ENCODE measurements at regions of chr1 and their contacts with region 1.

Region 1: GRCh38 chr1:226920446-226920894 is 19.6 kb upstream of the COQ8A start:
- DNase-seq: peak; percentile 76 to 93 (median 80)
- ATAC-seq: peak; percentile 95 to 97 (median 97)
- H3K4me3 ChIP-seq: no peak overlapping the region
- H3K27ac ChIP-seq: peak overlapping the region; percentile 81 to 96 (median 86)
- H3K4me1 ChIP-seq: peaks cover 0 to 37% (median 5%) of the 10 kb centered on the region in 12 donors
- H3K27me3 ChIP-seq: no peaks in the 10 kb centered on the region
- CTCF ChIP-seq: no peak
- POLR2A ChIP-seq: no peak

Region 2: DNA sequence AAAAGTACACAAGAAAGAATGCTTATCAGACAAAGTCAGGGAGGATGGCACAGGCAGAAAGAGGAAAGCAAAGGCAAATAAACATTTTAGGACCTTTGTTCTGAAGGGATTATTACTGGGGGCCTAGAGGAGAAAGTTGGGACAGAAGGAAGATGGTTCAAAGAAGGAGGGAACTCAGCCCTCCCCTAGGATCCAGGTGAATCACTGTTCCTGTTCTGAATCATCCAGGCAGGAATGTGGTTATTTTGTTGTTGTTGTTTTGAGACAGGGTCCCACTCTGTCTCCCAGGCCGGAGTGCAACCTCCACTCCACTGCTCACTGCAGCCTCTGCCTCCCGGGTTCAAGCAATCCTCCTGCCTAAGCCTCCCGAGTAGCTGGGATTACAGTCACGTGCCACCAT is 88.5 kb before region 1 on chr1:
- intact Hi-C with region 1: no loop called
- DNase-seq: no peak
- ATAC-seq: no peak
- H3K4me3 ChIP-seq: no peak overlapping the region
- H3K27ac ChIP-seq: no peak overlapping the region
- H3K4me1 ChIP-seq: peaks cover 0 to 17% (median 14%) of the 10 kb centered on the region in 12 donors
- H3K27me3 ChIP-seq: no peaks in the 10 kb centered on the region
- CTCF ChIP-seq: no peak
- POLR2A ChIP-seq: no peak

Region 3: GRCh38 chr1:226940029-226940805 is 19.7 kb after region 1 on chr1 and contains the start of gene COQ8A:
- intact Hi-C with region 1: loop called in 2 of 10 experiments (anchors 1 to 2 kb)
- DNase-seq: peak; percentile 99 to 100 (median 100)
- ATAC-seq: peak; percentile 96 to 98 (median 98)
- H3K4me3 ChIP-seq: peak within 1 kb of the TSS; percentile 73 to 98 (median 86)
- H3K27ac ChIP-seq: peak within 1 kb of the TSS; percentile 92 to 99 (median 98)
- H3K4me1 ChIP-seq: peaks cover 3 to 62% (median 47%) of the 10 kb centered on the region in 12 donors
- H3K27me3 ChIP-seq: no peaks in the 10 kb centered on the region
- CTCF ChIP-seq: no peak
- POLR2A ChIP-seq: peak; percentile 6 to 87
- total RNA-seq, gene COQ8A: 141 to 915 (median 310) TPM

Region 4: GRCh38 chr1:226973898-226974543 is 53.6 kb after region 1 on chr1:
- intact Hi-C with region 1: loop called in 3 of 10 experiments (anchors 2 to 10 kb)
- DNase-seq: peak in 2 of 5 donors; percentile 67 to 75
- ATAC-seq: peak; percentile 11 to 72 (median 64)
- H3K4me3 ChIP-seq: no peak overlapping the region
- H3K27ac ChIP-seq: peak overlapping the region; percentile 80 to 97 (median 94)
- H3K4me1 ChIP-seq: peaks cover 0 to 53% (median 36%) of the 10 kb centered on the region in 12 donors
- H3K27me3 ChIP-seq: no peaks in the 10 kb centered on the region
- CTCF ChIP-seq: peak in 2 of 12 donors; percentile 9 to 16
- POLR2A ChIP-seq: no peak

Region 5: DNA sequence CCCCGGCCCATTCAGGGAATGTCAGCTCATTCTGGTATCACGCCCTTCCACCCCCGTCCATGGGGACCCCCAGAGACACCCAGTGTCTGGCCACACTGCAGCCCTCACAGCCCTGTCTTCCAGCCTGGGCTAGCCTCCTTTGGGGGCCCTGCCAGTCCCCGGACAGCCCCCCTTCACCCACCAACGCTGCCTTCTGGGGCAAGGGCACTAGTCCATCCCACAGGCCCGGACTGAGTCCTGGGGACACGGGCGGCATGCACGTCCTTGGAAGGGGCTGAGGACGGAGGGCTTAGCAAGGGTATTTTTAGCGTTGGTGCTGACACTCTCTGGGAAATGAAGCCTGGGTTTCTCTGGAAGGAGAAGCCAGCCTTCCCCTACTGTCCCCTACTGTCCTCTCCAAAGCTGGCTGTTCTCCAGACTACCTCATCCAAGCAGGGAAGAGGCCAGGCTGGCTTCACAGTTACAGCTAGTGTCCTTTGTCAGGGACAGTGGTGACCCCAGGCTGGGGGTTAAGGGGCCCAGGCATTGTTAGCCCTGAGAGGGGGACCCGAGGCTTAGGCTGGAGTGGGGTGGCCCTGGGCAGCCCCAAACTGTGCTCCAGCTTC is 59.1 kb after region 1 on chr1:
- intact Hi-C with region 1: loop called in 3 of 10 experiments (anchors 2 to 10 kb)
- DNase-seq: peak; percentile 73 to 86 (median 76)
- ATAC-seq: peak; percentile 66 to 82 (median 74)
- H3K4me3 ChIP-seq: no peak overlapping the region
- H3K27ac ChIP-seq: peak overlapping the region; percentile 71 to 98 (median 92)
- H3K4me1 ChIP-seq: peaks cover 0 to 90% (median 48%) of the 10 kb centered on the region in 12 donors
- H3K27me3 ChIP-seq: no peaks in the 10 kb centered on the region
- CTCF ChIP-seq: no peak
- POLR2A ChIP-seq: no peak

Region 6: DNA sequence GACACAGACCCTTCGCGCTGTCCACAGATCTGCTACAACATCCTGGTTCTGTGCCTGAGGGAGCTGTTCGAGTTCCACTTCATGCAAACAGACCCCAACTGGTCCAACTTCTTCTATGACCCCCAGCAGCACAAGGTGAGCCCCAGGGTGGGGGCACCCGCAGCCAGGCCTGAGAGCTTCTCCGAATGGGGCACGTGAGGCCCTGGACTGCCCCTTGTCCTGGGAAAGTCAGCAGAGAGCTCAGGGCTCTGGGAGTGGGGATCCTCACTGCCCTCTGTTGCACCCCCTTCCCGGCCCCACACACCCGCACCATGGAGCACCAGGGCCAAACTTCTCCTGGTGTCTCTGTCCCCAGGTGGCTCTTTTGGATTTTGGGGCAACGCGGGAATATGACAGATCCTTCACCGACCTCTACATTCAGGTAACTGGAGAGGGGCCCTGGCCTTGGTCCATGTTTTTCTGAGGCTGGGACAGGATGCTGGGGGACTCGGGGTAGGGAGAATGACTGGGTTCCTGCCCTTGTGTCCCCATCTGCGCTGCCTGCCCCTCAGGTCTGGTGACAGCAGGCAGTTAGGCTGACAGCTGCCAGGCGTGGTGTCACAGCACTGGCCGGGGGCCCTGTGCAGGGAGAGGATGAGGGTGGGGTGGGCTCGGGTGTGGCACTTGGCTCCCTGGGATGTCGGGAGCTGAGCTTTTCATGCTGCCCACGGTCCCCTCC is 64.2 kb after region 1 on chr1:
- intact Hi-C with region 1: loop called in 5 of 10 experiments (anchors 2 to 10 kb)
- DNase-seq: peak; percentile 67 to 79 (median 74)
- ATAC-seq: peak; percentile 24 to 67 (median 36)
- H3K4me3 ChIP-seq: no peak overlapping the region
- H3K27ac ChIP-seq: peak overlapping the region in 11 of 12 donors; percentile 60 to 96 (median 79)
- H3K4me1 ChIP-seq: peaks cover 0 to 100% (median 50%) of the 10 kb centered on the region in 12 donors
- H3K27me3 ChIP-seq: no peaks in the 10 kb centered on the region
- CTCF ChIP-seq: no peak
- POLR2A ChIP-seq: no peak

Region 7: GRCh38 chr1:226990133-226990716 is 69.8 kb after region 1 on chr1:
- intact Hi-C with region 1: loop called in 3 of 10 experiments (anchors 2 to 5 kb)
- DNase-seq: peak in 2 of 5 donors; percentile 18 to 38
- ATAC-seq: peak in 3 of 4 donors; percentile 19 to 37 (median 26)
- H3K4me3 ChIP-seq: no peak overlapping the region
- H3K27ac ChIP-seq: peak overlapping the region in 10 of 12 donors; percentile 9 to 94 (median 56)
- H3K4me1 ChIP-seq: peaks cover 0 to 75% (median 43%) of the 10 kb centered on the region in 12 donors
- H3K27me3 ChIP-seq: no peaks in the 10 kb centered on the region
- CTCF ChIP-seq: no peak
- POLR2A ChIP-seq: no peak